Astrocyte of the cerebellum (primary cell): ENCODE measurements at regions of chr10 and their contacts with region 1.

Region 1: DNA sequence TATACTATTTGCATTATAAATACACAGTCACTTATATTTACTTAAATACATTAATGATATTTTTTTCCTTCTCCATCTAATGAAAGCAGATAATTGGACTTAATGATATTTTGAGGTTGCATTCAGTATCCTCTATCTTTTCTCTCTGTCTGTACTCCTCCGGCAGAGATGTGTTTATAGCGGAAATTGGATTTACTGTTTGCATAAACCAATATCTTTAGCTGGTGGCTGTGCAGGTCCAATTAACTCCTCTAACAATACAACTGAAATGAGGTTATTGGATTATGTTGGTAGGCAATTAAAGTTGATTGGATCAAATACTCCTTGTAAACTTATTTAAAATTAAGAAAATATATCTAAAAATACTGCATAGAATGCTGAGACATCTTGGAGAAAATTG is 1044.2 kb upstream of the SORCS1 start:
- DNase-seq: no peak
- H3K4me3 ChIP-seq: no peak overlapping the region
- CTCF ChIP-seq: no peak

Region 2: DNA sequence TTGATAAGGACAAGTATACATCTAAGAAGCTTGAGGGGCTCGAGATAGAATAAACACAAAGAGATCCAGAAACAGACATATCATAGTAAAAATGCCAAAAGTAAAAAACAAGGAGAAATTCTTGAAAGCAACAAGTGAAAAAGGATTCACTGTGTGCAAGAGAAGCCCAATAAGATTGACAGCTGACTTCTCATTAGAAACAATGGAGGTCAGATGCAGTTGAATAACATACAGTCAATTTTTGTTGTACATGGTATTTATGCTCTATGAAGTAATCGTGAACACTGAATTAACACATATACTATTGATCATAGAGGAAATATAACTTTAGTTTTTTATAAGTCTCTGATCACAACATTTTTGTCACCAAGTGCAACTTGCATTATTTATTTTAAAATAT is 61.4 kb before region 1 on chr10:
- in situ Hi-C with region 1: loop called (anchors 5 kb)
- DNase-seq: no peak
- H3K4me3 ChIP-seq: no peak overlapping the region
- CTCF ChIP-seq: no peak